ENCODE measurements at regions of chr9 and their contacts with region 1.

Region 1: DNA sequence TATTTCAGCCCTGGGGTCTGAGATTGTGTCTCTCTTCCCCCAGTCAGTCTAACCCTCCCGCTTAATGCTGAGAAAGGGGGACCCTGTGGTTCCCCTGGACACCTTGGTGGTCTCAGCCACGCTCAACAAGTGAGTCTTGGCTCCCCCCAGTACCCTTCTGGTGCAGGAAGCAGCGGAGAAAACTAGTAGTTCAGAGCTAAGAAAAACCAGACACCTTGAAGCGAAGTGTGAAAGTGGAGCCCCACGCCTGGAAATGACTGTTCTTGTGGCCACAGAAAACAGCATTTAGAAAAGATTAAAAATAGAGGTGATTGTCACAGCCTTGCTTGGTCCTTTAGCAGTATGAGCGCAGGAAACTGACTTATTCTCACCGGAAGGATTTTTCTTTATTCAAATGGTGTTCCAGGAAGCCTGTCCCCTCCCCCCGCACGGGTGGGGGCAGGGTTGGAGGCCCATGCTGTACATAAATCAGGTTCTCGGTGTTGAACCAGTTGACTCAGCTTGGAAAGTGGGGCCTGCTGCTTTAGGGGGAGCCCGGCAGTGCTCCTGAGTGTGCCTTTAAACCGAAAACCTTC is 8.1 kb downstream of the ARPC5L start:
- DNase-seq: peak; percentile 44
- H3K4me3 ChIP-seq: peak overlapping the region; percentile 63 to 89 (median 76)
- H3K27ac ChIP-seq: peak overlapping the region; percentile 53
- H3K4me1 ChIP-seq: peaks cover 21% of the 10 kb centered on the region
- H3K27me3 ChIP-seq: no peaks in the 10 kb centered on the region
- CTCF ChIP-seq: no peak

Region 2: DNA sequence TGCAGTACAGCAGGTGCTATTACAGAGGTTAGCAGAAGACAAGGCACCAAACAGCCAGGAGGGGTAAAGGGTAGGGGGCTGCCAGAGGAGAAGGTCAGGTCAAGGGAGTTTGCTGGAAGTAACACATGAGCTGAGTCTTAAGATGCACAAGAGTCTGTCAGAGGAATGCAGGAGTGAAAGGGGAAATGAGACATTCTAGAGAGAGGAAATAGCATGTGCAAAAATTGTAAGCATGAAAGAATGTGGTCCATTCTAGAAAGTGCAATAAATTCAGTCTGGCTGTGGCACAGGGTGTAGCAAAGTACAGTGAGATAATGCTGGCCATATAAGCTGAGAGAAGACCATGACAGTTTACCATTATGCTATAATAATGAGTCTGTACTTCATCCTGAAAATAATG is 64.2 kb after region 1 on chr9:
- CTCF ChIA-PET with region 1: no interaction called
- dilution Hi-C with region 1: loop called (anchors 10 kb)
- in situ Hi-C with region 1: no loop called
- intact Hi-C with region 1: no loop called
- DNase-seq: no peak
- H3K4me3 ChIP-seq: no peak overlapping the region
- H3K27ac ChIP-seq: no peak overlapping the region
- H3K4me1 ChIP-seq: no peaks in the 10 kb centered on the region
- H3K27me3 ChIP-seq: no peaks in the 10 kb centered on the region
- CTCF ChIP-seq: no peak

Region 3: GRCh38 chr9:124975131-124975530 is 105.1 kb after region 1 on chr9:
- CTCF ChIA-PET with region 1: interaction called, 10 read pairs
- dilution Hi-C with region 1: no loop called
- in situ Hi-C with region 1: no loop called
- intact Hi-C with region 1: no loop called
- DNase-seq: no peak
- H3K4me3 ChIP-seq: no peak overlapping the region
- H3K27ac ChIP-seq: no peak overlapping the region
- H3K4me1 ChIP-seq: no peaks in the 10 kb centered on the region
- H3K27me3 ChIP-seq: no peaks in the 10 kb centered on the region
- CTCF ChIP-seq: no peak

Region 4: GRCh38 chr9:125143375-125144090 is 273.5 kb after region 1 on chr9 and contains the start of gene SCAI:
- CTCF ChIA-PET with region 1: no interaction called
- dilution Hi-C with region 1: no loop called
- in situ Hi-C with region 1: loop called in 1 of 2 experiments (anchors 10 kb)
- intact Hi-C with region 1: loop called (anchors 1 kb)
- DNase-seq: peak; percentile 98
- H3K4me3 ChIP-seq: peak within 1 kb of the TSS; percentile 38 to 67 (median 59)
- H3K27ac ChIP-seq: no peak within 1 kb of the TSS
- H3K4me1 ChIP-seq: peaks cover 10% of the 10 kb centered on the region
- H3K27me3 ChIP-seq: no peaks in the 10 kb centered on the region
- CTCF ChIP-seq: peak; percentile 83 to 98
- total RNA-seq, gene SCAI: 3.1 to 7.7 TPM